Activated T-helper 2 cell treated with anti-CD3 and anti-CD28 coated beads, Interferon-gamma antibody, Interleukin-2, Interleukin-4, amounts not matched to agents 10 μg/mL and 5 μg/mL and 100 μg/mL, durations not matched to agents 14 hours and 24 hours and 36 hours (primary cell): ENCODE measurements at regions of chr5 and their contacts with region 1.

Region 1: DNA sequence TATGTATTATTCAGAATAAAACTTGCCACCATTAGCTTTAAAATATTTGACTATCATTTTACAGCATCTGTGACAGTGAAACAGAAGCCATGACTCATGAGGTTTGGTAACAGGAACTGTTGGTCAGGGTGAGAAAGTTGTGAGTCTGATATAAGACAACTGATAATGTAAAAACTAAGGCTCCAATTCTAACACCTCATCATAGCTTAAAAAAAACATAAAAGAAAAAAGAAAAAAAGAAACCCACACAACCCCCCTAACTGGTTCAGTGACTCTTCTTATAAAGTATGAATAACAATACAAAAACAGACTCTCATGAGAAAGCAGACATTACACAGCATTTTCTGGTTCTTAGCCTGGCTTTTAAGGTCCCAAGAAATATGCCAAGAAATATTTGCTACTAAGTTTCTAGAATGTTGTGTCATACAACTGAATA is 85.8 kb downstream of the MRPS27 start:
- DNase-seq: no peak
- H3K4me3 Mint-ChIP-seq: no peak overlapping the region
- H3K27ac Mint-ChIP-seq: no peak overlapping the region
- H3K4me1 Mint-ChIP-seq: peaks cover 42% of the 10 kb centered on the region
- H3K27me3 Mint-ChIP-seq: peaks cover 25% of the 10 kb centered on the region

Region 2: DNA sequence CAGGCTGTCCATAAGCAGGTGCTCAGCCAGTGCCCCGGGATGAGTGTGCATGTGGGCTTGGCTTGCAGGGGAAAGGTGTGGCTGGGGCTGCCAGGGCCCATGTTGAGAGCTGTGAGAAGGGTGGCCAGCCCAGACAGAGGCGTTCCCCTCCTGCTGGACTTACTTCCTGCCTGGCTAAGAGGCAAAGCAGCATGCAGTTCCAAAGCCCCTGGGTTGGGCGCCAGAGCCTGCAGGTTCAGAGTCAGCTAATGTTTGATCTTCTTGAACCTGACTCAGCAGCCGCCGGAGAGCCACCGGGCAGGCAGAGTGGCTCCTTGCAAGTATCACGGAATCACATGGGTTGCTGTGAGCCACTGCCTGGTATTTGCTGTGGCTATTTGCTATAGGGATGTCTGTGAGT is 295.4 kb before region 1 on chr5:
- intact Hi-C with region 1: no loop called
- DNase-seq: no peak
- H3K4me3 Mint-ChIP-seq: no peak overlapping the region
- H3K27ac Mint-ChIP-seq: no peak overlapping the region
- H3K4me1 Mint-ChIP-seq: no peaks in the 10 kb centered on the region
- H3K27me3 Mint-ChIP-seq: no peaks in the 10 kb centered on the region

Region 3: DNA sequence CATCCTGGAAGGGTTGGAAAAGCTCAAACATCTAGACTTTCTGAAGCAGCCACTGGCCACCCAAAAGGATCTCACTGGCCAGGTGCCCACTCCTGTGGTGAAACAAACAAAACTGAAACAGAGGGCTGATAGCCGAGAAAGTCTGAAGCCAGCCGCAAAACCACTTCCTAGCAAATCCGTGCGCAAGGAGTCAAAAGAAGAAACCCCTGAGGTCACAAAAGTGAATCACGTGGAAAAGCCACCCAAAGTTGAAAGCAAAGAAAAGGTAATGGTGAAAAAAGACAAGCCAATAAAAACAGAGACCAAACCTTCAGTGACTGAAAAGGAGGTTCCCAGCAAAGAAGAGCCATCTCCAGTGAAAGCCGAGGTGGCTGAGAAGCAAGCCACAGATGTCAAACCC is 39.4 kb before region 1 on chr5:
- intact Hi-C with region 1: loop called (anchors 1 kb)
- DNase-seq: peak; percentile 21
- H3K4me3 Mint-ChIP-seq: peak overlapping the region; percentile 11
- H3K27ac Mint-ChIP-seq: no peak overlapping the region
- H3K4me1 Mint-ChIP-seq: peaks cover 9% of the 10 kb centered on the region
- H3K27me3 Mint-ChIP-seq: peaks cover 82% of the 10 kb centered on the region